Activated naive CD4-positive, alpha-beta T cell treated with anti-CD3 and anti-CD28 coated beads for 36 hours (primary cell): ENCODE measurements at regions of chr10 and their contacts with region 1.

Region 1: GRCh38 chr10:97072851-97073665 is 112.7 kb downstream of the SLIT1 start:
- DNase-seq: peak; percentile 94
- H3K4me3 Mint-ChIP-seq: no peak overlapping the region
- H3K27ac Mint-ChIP-seq: no peak overlapping the region
- H3K4me1 Mint-ChIP-seq: peaks cover 10% of the 10 kb centered on the region
- H3K27me3 Mint-ChIP-seq: peaks cover 25% of the 10 kb centered on the region

Region 2: DNA sequence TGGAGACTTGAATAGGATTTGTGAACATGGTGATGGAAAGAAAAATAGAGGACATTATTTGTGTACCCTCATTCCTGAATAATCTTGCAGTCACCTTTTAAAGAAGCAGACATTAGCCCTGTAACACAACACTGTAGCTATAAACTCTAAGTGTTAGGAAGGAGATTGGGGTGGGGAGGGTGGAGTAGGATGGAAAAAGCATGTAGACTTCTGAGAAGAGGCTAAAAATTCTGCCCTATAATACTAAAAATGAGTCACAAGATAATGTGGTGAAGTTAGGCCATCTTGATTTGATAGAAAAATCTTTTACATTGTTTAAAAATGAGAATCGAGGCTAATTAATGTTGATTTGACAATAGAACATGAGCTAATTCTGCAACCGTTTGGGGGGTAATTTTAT is 112.2 kb before region 1 on chr10:
- CTCF ChIA-PET with region 1: no interaction called
- intact Hi-C with region 1: no loop called
- DNase-seq: no peak
- H3K4me3 Mint-ChIP-seq: no peak overlapping the region
- H3K27ac Mint-ChIP-seq: no peak overlapping the region
- H3K4me1 Mint-ChIP-seq: peaks cover 9% of the 10 kb centered on the region
- H3K27me3 Mint-ChIP-seq: no peaks in the 10 kb centered on the region

Region 3: DNA sequence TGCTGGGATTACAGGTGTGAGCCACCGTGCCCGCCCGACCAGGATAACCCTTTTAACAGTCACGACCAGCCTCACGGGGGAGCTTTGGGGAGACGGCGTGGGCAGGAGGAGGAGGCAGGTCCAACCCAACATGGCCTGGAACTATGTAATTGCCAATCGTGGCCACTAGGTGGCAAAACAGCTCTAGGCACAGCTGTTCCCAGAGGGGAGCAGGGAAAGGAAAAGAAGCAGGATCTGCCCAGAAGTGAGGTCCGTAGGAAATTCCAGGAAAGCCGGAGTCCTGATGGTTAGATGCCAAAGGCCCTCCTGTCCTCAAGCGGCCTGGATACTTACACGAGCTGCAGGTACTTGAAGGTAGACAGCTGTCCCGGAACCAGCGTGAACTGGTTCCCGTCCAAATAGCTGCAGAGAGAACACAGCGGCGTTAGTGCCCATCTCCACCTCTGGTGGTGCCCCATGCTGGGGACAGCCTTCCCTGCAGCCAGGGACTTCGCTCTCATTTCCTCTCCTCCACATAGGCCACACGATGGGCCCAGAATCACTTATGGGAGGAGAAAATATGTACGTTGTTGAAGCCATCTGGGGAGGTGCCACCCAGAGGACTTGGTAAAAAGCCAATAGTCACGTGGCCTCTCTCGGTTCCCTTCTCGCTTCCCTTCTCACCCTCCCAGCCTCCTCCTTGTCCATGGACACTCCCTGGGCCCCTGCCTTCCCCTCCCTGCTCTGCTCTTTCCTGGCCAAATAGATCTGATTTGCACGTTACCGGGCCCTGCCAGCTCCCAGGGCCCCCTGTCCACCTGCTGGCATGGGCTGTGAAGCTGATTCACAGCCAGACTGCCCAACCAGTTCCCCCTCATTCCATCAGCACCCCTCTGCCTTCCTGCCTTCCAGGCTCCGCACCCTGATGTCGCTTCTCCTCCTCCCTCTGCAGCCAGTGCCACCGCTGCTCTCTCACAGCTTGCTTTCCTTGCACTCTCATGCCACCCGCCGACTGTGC is 35.4 kb before region 1 on chr10:
- CTCF ChIA-PET with region 1: interaction called, 28 read pairs
- intact Hi-C with region 1: loop called (anchors 2 kb)
- DNase-seq: peak; percentile 86
- H3K4me3 Mint-ChIP-seq: peak overlapping the region; percentile 48
- H3K27ac Mint-ChIP-seq: no peak overlapping the region
- H3K4me1 Mint-ChIP-seq: peaks cover 10% of the 10 kb centered on the region
- H3K27me3 Mint-ChIP-seq: no peaks in the 10 kb centered on the region

Region 4: DNA sequence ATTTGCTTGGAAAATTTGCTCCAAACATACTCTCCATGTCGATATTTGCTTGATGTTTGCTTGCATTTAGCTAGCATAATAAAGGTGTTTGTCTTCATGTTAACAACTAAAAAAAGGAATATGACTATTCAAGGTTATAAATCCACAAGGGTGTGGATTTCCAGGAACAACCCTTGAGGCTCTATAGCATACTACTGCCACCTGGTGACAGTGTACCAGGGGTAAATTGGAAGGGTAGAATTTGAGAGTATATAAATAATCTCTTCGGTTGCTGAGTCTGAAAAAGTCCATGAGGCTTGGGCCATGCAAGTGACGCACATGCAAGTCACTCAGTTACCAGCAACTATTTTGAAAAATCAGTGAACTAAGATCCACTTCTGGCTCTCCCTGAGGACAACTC is 44.3 kb after region 1 on chr10:
- CTCF ChIA-PET with region 1: interaction called, 9 read pairs
- intact Hi-C with region 1: loop called (anchors 1 kb)
- DNase-seq: no peak
- H3K4me3 Mint-ChIP-seq: no peak overlapping the region
- H3K27ac Mint-ChIP-seq: no peak overlapping the region
- H3K4me1 Mint-ChIP-seq: no peaks in the 10 kb centered on the region
- H3K27me3 Mint-ChIP-seq: peaks cover 2% of the 10 kb centered on the region

Region 5: DNA sequence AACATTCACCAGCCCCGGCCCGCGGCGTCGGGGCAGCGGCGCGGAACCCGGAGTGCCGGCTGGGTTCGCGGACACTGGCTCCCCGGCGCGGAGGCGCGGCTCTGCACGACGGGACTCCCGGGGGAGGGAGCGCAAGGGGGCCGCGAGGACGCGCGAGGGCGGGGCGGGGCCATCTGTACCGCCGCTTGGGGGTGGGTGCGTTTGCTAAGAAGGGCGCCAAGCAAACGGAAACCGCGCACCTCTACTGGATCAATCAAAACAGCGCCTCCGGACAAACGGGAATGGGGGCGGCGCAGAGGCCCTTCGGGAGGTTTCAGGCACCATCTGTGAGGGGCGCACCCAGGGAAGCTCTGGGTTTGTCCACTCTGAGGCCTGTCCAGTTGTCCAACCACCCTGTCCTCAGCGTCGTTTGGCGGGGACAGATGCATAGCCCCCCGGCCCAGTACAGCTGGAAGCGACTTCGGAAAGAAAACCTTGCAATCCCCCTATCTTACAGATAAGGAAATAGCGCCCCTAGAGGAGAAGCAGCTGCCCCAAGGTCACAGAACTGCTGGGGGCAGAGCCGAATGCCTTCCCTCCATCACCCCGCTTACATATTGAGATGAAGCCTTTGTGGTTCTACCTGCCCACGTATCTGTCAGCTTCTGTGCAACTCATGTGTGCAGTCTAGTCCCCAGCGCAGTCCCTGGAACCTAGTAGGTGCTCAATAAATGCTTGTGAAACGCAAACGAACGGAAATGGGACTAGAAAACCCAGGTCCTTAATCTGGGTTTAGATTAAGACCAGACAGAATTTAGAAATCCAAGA is 123.4 kb after region 1 on chr10:
- CTCF ChIA-PET with region 1: interaction called, 26 read pairs
- intact Hi-C with region 1: no loop called
- DNase-seq: peak; percentile 67
- H3K4me3 Mint-ChIP-seq: peak overlapping the region; percentile 65
- H3K27ac Mint-ChIP-seq: no peak overlapping the region
- H3K4me1 Mint-ChIP-seq: peaks cover 7% of the 10 kb centered on the region
- H3K27me3 Mint-ChIP-seq: peaks cover 19% of the 10 kb centered on the region

Region 6: GRCh38 chr10:97210543-97210961 is 137.5 kb after region 1 on chr10:
- CTCF ChIA-PET with region 1: interaction called, 213 read pairs
- intact Hi-C with region 1: loop called (anchors 1 kb)
- DNase-seq: peak; percentile 86
- H3K4me3 Mint-ChIP-seq: no peak overlapping the region
- H3K27ac Mint-ChIP-seq: no peak overlapping the region
- H3K4me1 Mint-ChIP-seq: no peaks in the 10 kb centered on the region
- H3K27me3 Mint-ChIP-seq: peaks cover 2% of the 10 kb centered on the region

Region 7: GRCh38 chr10:97334370-97335175 is 261.5 kb after region 1 on chr10 and contains the start of gene FRAT2:
- CTCF ChIA-PET with region 1: interaction called, 4 read pairs
- intact Hi-C with region 1: loop called (anchors 2 kb)
- DNase-seq: peak; percentile 87
- H3K4me3 Mint-ChIP-seq: peak within 1 kb of the TSS; percentile 75
- H3K27ac Mint-ChIP-seq: peak within 1 kb of the TSS; percentile 86
- H3K4me1 Mint-ChIP-seq: peaks cover 32% of the 10 kb centered on the region
- H3K27me3 Mint-ChIP-seq: no peaks in the 10 kb centered on the region
- total RNA-seq, gene FRAT2: 5.1 to 5.6 TPM